Common myeloid progenitor, CD34-positive (primary cell): ENCODE measurements at regions of chr18 and their contacts with region 1.

Region 1: DNA sequence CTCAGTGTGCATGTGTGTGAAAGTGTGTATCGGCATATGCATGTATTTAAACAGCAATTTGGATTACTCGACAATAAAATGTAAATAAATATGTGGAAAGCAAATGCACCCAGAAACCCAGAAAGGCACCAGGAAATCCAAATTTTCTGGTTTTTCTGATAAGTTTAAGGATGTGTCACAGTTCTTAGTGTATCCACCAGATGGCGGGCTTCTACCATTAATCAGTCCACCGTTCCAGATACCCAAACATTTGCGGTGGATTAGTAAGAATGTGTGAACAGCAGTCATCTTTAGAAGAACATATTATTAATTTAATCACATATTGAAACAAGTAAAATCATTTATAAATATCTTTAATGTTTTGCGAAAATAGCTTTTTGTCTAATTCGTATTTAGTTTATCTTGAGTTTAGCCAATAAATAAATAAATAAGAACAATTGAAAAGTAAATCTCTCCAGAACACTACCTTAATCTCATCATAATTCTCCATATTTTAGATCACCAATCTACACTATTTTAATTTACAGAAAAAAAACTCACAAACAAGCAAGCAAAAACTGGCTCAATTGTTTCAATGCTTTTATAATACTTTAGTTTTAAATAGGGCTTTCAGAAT is 298.9 kb downstream of the DSEL start:
- DNase-seq: peak; percentile 65 to 85 (median 77)
- H3K4me3 ChIP-seq: no peak overlapping the region
- H3K27ac ChIP-seq: no peak overlapping the region
- H3K4me1 ChIP-seq: no peaks in the 10 kb centered on the region
- H3K27me3 ChIP-seq: peaks cover 0 to 18% (median 0%) of the 10 kb centered on the region in 5 experiments

Region 2: DNA sequence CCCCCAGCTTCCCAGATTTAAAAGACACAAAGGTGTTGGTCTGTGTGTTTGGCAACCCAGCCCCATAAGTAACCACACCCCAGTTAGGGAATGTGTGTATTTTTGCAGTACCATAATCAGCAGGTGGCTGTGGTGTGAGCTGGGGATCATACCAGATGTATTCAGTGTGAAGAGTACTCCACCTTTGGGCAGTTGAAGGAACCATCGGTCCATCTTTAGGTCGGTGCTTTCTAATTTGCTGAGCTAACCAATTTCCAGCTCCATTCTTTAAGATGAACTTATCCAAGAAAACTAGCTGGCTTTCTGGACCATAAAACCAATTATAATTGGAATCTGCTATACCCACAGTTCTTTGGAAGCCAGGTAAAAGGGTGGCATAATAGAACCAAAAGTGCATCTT is 295.6 kb after region 1 on chr18:
- CTCF ChIA-PET with region 1: interaction called, 12 read pairs
- POLR2A ChIA-PET with region 1: no interaction called
- DNase-seq: peak; percentile 14 to 60 (median 45)
- H3K4me3 ChIP-seq: no peak overlapping the region
- H3K27ac ChIP-seq: no peak overlapping the region
- H3K4me1 ChIP-seq: peaks cover 6 to 14% (median 11%) of the 10 kb centered on the region in 4 experiments
- H3K27me3 ChIP-seq: peaks cover 0 to 7% (median 0%) of the 10 kb centered on the region in 5 experiments